K562 (cell line): ENCODE measurements at regions of chr10 and their contacts with region 1.

Region 1: GRCh38 chr10:5684318-5684970 is at the start of gene TASOR2:
- DNase-seq: peak; percentile 90 to 99 (median 94)
- ATAC-seq: peak; percentile 83
- H3K4me3 ChIP-seq: peak within 1 kb of the TSS; percentile 92
- H3K27ac ChIP-seq: peak within 1 kb of the TSS; percentile 96
- H3K4me1 ChIP-seq: peaks cover 18 to 22% of the 10 kb centered on the region in 2 experiments; a peak in 4 of 5 replicates
- H3K27me3 ChIP-seq: no peaks in the 10 kb centered on the region
- CTCF ChIP-seq: no peak
- EP300 ChIP-seq: no peak
- POLR2A ChIP-seq: peak; percentile 77
- RAD21 ChIP-seq: no peak
- polyA plus RNA-seq, gene TASOR2: 12.7 to 14.1 TPM

Region 2: DNA sequence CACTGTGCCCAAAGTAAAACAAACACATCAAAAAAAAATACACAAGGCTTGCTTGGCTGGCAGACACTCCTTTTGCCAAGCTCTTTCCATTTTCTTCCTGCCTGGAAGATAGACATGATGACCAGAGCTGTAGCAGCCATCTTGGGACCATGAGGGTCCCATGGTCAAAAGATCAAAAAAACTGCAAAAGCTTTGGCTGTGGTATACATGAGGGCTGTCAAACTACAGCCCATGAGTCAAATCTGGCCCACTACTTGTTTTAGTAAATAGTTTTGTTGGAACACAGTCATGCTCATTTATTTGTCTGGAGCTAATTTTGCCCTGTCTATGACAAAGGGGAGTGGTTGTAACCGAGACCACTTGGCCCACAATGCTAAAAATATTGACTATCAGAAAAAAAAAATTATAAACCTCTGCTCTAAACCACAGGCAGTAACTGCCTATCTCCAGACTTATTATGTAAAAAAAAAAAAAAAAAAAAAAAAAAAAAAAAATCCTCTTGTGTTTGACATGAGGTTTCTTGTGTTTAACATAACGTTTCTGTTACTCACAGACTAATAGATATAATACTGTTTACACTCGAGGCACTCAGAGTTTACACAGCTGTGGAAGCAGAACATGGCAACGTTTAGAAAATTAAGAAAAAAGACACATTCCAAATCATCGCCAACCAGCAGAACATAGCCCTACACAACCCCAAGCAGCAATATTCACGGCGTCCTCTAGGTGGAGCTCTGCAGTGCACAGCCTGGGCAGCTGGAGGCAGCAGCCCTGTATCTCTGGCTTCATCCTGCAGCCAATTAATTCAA is 54.9 kb before region 1 on chr10:
- CTCF ChIA-PET with region 1: no interaction called
- POLR2A ChIA-PET with region 1: no interaction called
- in situ Hi-C with region 1: no loop called
- intact Hi-C with region 1: loop called (anchors 1 kb)
- DNase-seq: peak; percentile 80 to 86 (median 81)
- ATAC-seq: peak; percentile 96
- H3K4me3 ChIP-seq: no peak overlapping the region
- H3K27ac ChIP-seq: no peak overlapping the region
- H3K4me1 ChIP-seq: peaks cover 0 to 6% of the 10 kb centered on the region in 2 experiments; a peak in 1 of 5 replicates
- H3K27me3 ChIP-seq: peaks cover 5 to 24% of the 10 kb centered on the region in 2 experiments; a peak in 4 of 5 replicates
- CTCF ChIP-seq: peak; percentile 92 to 98 (median 94)
- EP300 ChIP-seq: no peak
- POLR2A ChIP-seq: no peak
- RAD21 ChIP-seq: peak; percentile 56 to 76

Region 3: DNA sequence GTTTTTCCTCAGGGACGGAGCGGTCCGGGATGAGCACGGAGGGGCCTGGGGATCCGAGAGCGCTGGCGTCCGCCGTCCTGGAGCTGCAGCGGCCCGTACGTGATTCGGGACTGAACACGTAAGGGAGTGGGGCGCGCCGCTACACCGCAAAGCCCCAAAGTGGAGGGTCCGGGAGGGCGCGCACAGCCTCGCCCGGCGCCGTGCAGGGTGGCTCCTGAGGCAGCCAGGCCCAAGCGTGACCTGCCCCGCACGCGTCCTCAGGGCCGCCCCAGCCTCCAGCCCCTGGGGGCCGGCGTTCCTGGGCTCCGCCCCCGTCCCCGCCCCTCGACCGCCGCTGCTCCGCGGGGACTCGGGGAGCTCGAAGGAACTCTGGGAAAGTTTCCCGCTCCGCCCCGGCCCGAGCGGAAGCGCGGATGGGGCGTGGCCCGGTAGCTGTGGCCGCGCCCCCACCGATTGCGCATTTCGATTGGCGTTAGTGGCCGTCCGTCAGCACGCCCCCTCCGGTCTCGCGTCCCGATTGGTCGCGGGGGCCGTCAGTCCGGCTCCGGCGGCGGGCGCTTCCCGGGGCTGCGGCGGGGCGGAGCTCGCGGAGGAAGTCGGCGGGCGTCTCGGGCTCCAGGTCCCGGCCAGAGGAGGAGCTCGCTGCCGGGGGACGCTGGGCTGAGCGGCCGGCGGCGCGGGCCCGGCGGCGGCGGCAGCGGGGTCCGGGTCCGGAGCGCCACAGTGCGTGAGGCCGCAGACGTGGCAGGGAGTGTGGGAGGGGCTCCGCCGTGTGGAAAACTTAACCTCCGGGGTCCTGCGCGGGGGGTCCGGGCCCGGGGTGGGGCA is 205.4 kb after region 1 on chr10 and contains the starts of genes ANKRD16 and FBH1:
- CTCF ChIA-PET with region 1: no interaction called
- POLR2A ChIA-PET with region 1: interaction called, 7 read pairs
- in situ Hi-C with region 1: no loop called
- intact Hi-C with region 1: loop called (anchors 5 kb)
- DNase-seq: peak; percentile 97 to 99 (median 98)
- ATAC-seq: peak; percentile 92
- H3K4me3 ChIP-seq: peak within 1 kb of the TSS; percentile 84
- H3K27ac ChIP-seq: peak within 1 kb of the TSS; percentile 87
- H3K4me1 ChIP-seq: peaks cover 42 to 45% of the 10 kb centered on the region in 2 experiments
- H3K27me3 ChIP-seq: no peaks in the 10 kb centered on the region
- CTCF ChIP-seq: peak in 1 of 3 experiments; percentile 22; a peak in 2 of 6 replicates
- EP300 ChIP-seq: no peak
- POLR2A ChIP-seq: peak; percentile 90
- RAD21 ChIP-seq: no peak
- polyA plus RNA-seq, gene ANKRD16: 1.5 to 2.2 TPM
- polyA plus RNA-seq, gene FBH1: 13.4 to 23.4 TPM